Activated CD4-positive, alpha-beta memory T cell treated with anti-CD3 and anti-CD28 coated beads, Interleukin-2, amount 10 ng/mL, durations not matched to agents 7 days and 5 days (primary cell): ENCODE measurements at regions of chr10 and their contacts with region 1.

Region 1: DNA sequence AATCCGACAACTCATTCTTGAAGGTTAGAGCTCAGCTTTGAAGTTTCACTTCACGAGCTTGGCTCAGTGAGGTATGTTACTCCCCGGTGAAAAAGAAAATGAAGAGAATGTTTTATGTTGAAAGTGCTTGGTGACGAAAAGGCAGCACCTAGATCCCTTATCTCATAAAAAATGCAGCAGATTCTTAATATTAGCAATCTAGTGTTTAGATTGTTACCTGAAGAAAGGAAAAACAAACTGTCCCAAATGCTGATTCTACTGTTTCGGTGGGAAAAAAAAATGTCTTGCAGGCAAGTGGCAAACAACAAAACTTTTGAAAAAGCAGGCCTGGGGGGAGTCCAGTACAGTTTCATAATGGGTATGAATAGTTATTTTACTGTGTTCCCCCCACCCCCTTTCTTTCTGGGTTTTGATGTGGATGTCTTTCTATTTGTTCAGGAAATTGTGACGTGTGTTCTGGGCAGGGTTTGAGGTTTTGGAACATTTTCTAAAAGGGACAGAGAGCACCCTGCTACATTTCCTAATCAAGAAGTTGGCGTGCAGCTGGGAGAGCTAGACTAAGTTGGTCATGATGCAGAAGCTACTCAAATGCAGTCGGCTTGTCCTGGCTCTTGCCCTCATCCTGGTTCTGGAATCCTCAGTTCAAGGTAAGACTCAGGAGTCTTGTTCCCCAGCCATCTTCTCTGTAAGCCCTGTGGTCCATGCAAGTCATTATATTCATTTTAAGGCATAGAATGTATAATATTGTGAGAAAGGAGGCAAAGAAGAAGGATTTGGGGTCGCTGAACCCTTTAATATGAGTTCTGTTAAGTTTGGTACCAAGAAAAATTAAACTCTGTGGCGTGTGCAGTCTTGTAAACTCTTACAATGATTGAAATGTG is at the start of gene SRGN:
- DNase-seq: peak; percentile 85
- H3K4me3 Mint-ChIP-seq: peak within 1 kb of the TSS; percentile 89
- H3K27ac Mint-ChIP-seq: peak within 1 kb of the TSS; percentile 95
- H3K4me1 Mint-ChIP-seq: peaks cover 51% of the 10 kb centered on the region
- H3K27me3 Mint-ChIP-seq: no peaks in the 10 kb centered on the region
- total RNA-seq, gene SRGN: 468 to 474 TPM

Region 2: GRCh38 chr10:69004821-69005220 is 83.0 kb before region 1 on chr10:
- CTCF ChIA-PET with region 1: interaction called, 112 read pairs
- POLR2A ChIA-PET with region 1: interaction called, 49 read pairs
- DNase-seq: no peak
- H3K4me3 Mint-ChIP-seq: no peak overlapping the region
- H3K27ac Mint-ChIP-seq: no peak overlapping the region
- H3K4me1 Mint-ChIP-seq: peaks cover 12% of the 10 kb centered on the region
- H3K27me3 Mint-ChIP-seq: no peaks in the 10 kb centered on the region

Region 3: GRCh38 chr10:69033256-69033655 is 54.6 kb before region 1 on chr10:
- CTCF ChIA-PET with region 1: interaction called, 3 read pairs
- POLR2A ChIA-PET with region 1: interaction called, 12 read pairs
- DNase-seq: no peak
- H3K4me3 Mint-ChIP-seq: no peak overlapping the region
- H3K27ac Mint-ChIP-seq: no peak overlapping the region
- H3K4me1 Mint-ChIP-seq: peaks cover 3% of the 10 kb centered on the region
- H3K27me3 Mint-ChIP-seq: no peaks in the 10 kb centered on the region

Region 4: GRCh38 chr10:69056129-69056528 is 31.7 kb before region 1 on chr10:
- CTCF ChIA-PET with region 1: no interaction called
- POLR2A ChIA-PET with region 1: interaction called, 214 read pairs
- DNase-seq: no peak
- H3K4me3 Mint-ChIP-seq: no peak overlapping the region
- H3K27ac Mint-ChIP-seq: peak overlapping the region; percentile 49
- H3K4me1 Mint-ChIP-seq: peaks cover 58% of the 10 kb centered on the region
- H3K27me3 Mint-ChIP-seq: no peaks in the 10 kb centered on the region

Region 5: DNA sequence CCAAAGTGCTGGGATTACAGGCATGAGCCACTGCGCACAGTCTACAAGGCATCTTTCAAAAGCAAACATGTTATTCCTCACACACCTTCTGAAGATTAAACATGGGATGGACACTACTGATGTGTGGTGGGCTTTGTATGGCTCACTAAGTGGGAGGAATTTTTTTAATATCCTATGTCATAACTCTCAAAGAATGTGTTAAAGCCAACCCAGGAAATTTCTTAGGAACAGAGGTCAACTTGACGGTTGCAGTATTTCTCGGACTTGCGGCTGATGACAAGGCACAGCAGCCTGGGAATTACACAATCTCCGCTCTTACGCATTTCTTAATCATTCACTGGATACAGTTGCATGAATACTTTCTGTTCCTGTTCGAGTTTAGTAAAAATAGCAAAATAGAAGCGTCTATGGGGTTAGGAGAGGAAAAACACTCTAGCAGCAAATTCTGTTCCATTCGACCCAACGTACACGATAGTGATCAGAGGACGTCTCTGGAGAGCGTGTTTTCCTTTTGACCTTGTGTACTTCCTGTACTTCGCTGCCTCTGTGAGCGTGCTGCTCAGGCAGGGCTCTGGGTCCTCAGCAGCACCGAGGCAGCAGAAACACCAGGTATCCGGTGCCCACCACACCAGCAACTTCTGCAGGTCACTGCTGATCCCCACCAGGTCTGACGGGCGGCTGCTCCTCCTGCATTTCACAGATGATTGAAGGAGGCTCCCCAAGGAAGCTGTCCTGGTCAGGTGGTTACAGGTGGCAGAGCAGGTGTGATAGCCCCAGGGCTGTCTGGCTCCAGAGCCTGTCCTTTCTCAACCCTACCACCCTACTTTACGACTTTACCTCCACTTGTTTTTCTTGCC is 26.3 kb before region 1 on chr10:
- CTCF ChIA-PET with region 1: interaction called, 8 read pairs
- POLR2A ChIA-PET with region 1: interaction called, 26 read pairs
- DNase-seq: peak; percentile 53
- H3K4me3 Mint-ChIP-seq: peak overlapping the region; percentile 49
- H3K27ac Mint-ChIP-seq: peak overlapping the region; percentile 59
- H3K4me1 Mint-ChIP-seq: peaks cover 64% of the 10 kb centered on the region
- H3K27me3 Mint-ChIP-seq: no peaks in the 10 kb centered on the region

Region 6: GRCh38 chr10:69237528-69238159 is 149.8 kb after region 1 on chr10:
- CTCF ChIA-PET with region 1: no interaction called
- POLR2A ChIA-PET with region 1: no interaction called
- DNase-seq: peak; percentile 91
- H3K4me3 Mint-ChIP-seq: no peak overlapping the region
- H3K27ac Mint-ChIP-seq: no peak overlapping the region
- H3K4me1 Mint-ChIP-seq: peaks cover 63% of the 10 kb centered on the region
- H3K27me3 Mint-ChIP-seq: no peaks in the 10 kb centered on the region

Region 7: GRCh38 chr10:69360485-69361324 is 272.9 kb after region 1 on chr10:
- CTCF ChIA-PET with region 1: no interaction called
- POLR2A ChIA-PET with region 1: no interaction called
- DNase-seq: no peak
- H3K4me3 Mint-ChIP-seq: no peak overlapping the region
- H3K27ac Mint-ChIP-seq: peak overlapping the region; percentile 69
- H3K4me1 Mint-ChIP-seq: peaks cover 62% of the 10 kb centered on the region
- H3K27me3 Mint-ChIP-seq: no peaks in the 10 kb centered on the region